ENCODE measurements at regions of chr17 and their contacts with region 1.

Region 1: GRCh38 chr17:44218344-44219107 is 949 bp downstream of the UBTF start:
- DNase-seq: peak; percentile 89
- ATAC-seq: peak; percentile 50
- H3K4me3 ChIP-seq: peak overlapping the region; percentile 88 to 99 (median 98)
- H3K27ac ChIP-seq: peak overlapping the region; percentile 89
- H3K4me1 ChIP-seq: peaks cover 30% of the 10 kb centered on the region
- H3K27me3 ChIP-seq: no peaks in the 10 kb centered on the region; a peak in 1 of 5 replicates
- CTCF ChIP-seq: peak; percentile 82
- EP300 ChIP-seq: no peak; a peak in 1 of 4 replicates
- POLR2A ChIP-seq: peak; percentile 7 to 59; a peak in 3 of 4 replicates
- RAD21 ChIP-seq: no peak

Region 2: GRCh38 chr17:44186307-44187130 is 32.0 kb before region 1 on chr17 and contains the start of gene TMUB2:
- CTCF ChIA-PET with region 1: no interaction called
- POLR2A ChIA-PET with region 1: interaction called, 17 read pairs
- in situ Hi-C with region 1: no loop called
- intact Hi-C with region 1: no loop called
- DNase-seq: peak; percentile 99
- ATAC-seq: peak; percentile 81
- H3K4me3 ChIP-seq: peak within 1 kb of the TSS; percentile 95 to 97 (median 96)
- H3K27ac ChIP-seq: peak within 1 kb of the TSS; percentile 91
- H3K4me1 ChIP-seq: peaks cover 55% of the 10 kb centered on the region
- H3K27me3 ChIP-seq: no peaks in the 10 kb centered on the region; a peak in 1 of 5 replicates
- CTCF ChIP-seq: peak; percentile 16; the same call in 1 of the 2 replicates
- EP300 ChIP-seq: peak in 1 of 2 experiments; percentile 34; a peak in 1 of 4 replicates
- POLR2A ChIP-seq: peak; percentile 95 to 97
- RAD21 ChIP-seq: peak; percentile 9; the same call in 1 of the 2 replicates
- total RNA-seq, gene TMUB2: 18.7 and 26.9 TPM in 2 replicates

Region 3: GRCh38 chr17:44199553-44200477 is 18.7 kb before region 1 on chr17 and contains the start of gene ATXN7L3:
- CTCF ChIA-PET with region 1: interaction called, 13 read pairs
- POLR2A ChIA-PET with region 1: interaction called, 25 read pairs
- in situ Hi-C with region 1: no loop called
- intact Hi-C with region 1: loop called (anchors 2 kb)
- DNase-seq: peak; percentile 97
- ATAC-seq: peak; percentile 82
- H3K4me3 ChIP-seq: peak within 1 kb of the TSS; percentile 91 to 94 (median 91)
- H3K27ac ChIP-seq: peak within 1 kb of the TSS; percentile 95
- H3K4me1 ChIP-seq: peaks cover 39% of the 10 kb centered on the region
- H3K27me3 ChIP-seq: no peaks in the 10 kb centered on the region; a peak in 1 of 5 replicates
- CTCF ChIP-seq: no peak
- EP300 ChIP-seq: no peak; a peak in 1 of 4 replicates
- POLR2A ChIP-seq: peak in 1 of 2 experiments; percentile 65; a peak in 2 of 4 replicates
- RAD21 ChIP-seq: peak; percentile 24; the same call in 1 of the 2 replicates
- total RNA-seq, gene ATXN7L3: 45.7 and 59.1 TPM in 2 replicates

Region 4: GRCh38 chr17:44279666-44280391 is 61.3 kb after region 1 on chr17:
- CTCF ChIA-PET with region 1: no interaction called
- POLR2A ChIA-PET with region 1: interaction called, 13 read pairs
- in situ Hi-C with region 1: no loop called
- intact Hi-C with region 1: no loop called
- DNase-seq: peak; percentile 86
- ATAC-seq: peak; percentile 96
- H3K4me3 ChIP-seq: peak overlapping the region; percentile 8 to 69 (median 41); a peak in 4 of 6 replicates
- H3K27ac ChIP-seq: no peak overlapping the region
- H3K4me1 ChIP-seq: peaks cover 18% of the 10 kb centered on the region
- H3K27me3 ChIP-seq: peaks cover 0 to 28% of the 10 kb centered on the region in 2 experiments; a peak in 4 of 5 replicates
- CTCF ChIP-seq: peak; percentile 36; the same call in 1 of the 2 replicates
- EP300 ChIP-seq: peak in 1 of 2 experiments; percentile 24; a peak in 1 of 4 replicates
- POLR2A ChIP-seq: no peak
- RAD21 ChIP-seq: no peak

Region 5: DNA sequence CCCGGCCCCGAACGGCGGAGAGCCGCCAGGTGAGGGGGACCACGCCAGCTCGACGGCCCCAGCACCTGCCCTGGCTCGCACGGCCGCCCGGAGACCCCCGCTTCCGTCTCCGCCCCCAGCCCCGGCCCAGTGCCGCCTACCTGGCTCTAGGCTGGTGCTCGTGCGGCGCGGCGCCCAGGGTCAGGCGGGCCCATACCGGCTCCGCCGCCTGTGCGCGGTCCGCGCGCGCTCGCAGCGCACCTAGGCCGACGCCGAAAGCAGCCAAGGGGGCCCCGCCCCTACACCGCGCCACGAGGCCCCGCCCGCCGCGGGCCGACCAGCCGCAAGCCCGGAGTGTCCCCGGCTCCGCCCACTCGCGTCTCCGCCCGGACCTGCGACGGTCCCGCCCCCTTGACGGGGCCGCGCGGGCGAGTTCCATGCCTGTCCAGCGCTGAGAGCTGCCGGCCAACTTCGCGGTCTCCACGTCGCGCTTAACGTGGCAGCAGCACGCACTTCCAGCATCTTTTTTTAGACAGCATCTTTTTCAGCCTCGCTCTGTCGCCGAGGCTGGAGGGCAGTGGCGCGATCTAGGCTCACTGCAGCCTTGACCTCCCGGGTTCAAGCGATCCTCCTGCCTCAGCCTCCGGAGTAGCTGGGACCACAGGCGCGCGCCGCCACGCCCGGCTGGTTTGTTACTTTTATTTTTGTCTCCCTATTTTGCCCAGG is 106.2 kb after region 1 on chr17 and contains the start of gene SLC25A39:
- CTCF ChIA-PET with region 1: no interaction called
- POLR2A ChIA-PET with region 1: interaction called, 13 read pairs
- in situ Hi-C with region 1: loop called (anchors 5 kb)
- intact Hi-C with region 1: loop called (anchors 2 kb)
- DNase-seq: peak; percentile 85
- ATAC-seq: peak; percentile 80
- H3K4me3 ChIP-seq: peak within 1 kb of the TSS; percentile 78 to 97 (median 91)
- H3K27ac ChIP-seq: peak within 1 kb of the TSS; percentile 61
- H3K4me1 ChIP-seq: peaks cover 55% of the 10 kb centered on the region
- H3K27me3 ChIP-seq: no peaks in the 10 kb centered on the region; a peak in 3 of 5 replicates
- CTCF ChIP-seq: peak; percentile 22; the same call in 1 of the 2 replicates
- EP300 ChIP-seq: peak in 1 of 2 experiments; percentile 31; a peak in 2 of 4 replicates
- POLR2A ChIP-seq: peak; percentile 72 to 91
- RAD21 ChIP-seq: peak; percentile 71
- total RNA-seq, gene SLC25A39: 119 and 151 TPM in 2 replicates

Region 6: GRCh38 chr17:44344939-44345453 is 126.5 kb after region 1 on chr17 and contains the start of gene GRN:
- CTCF ChIA-PET with region 1: no interaction called
- POLR2A ChIA-PET with region 1: interaction called, 17 read pairs
- in situ Hi-C with region 1: no loop called
- intact Hi-C with region 1: no loop called
- DNase-seq: peak; percentile 100
- ATAC-seq: peak; percentile 98
- H3K4me3 ChIP-seq: peak within 1 kb of the TSS; percentile 86 to 99 (median 95)
- H3K27ac ChIP-seq: peak within 1 kb of the TSS; percentile 68
- H3K4me1 ChIP-seq: peaks cover 25% of the 10 kb centered on the region
- H3K27me3 ChIP-seq: peaks cover 0 to 10% of the 10 kb centered on the region in 2 experiments; a peak in 1 of 5 replicates
- CTCF ChIP-seq: no peak
- EP300 ChIP-seq: peak in 1 of 2 experiments; percentile 63; a peak in 2 of 4 replicates
- POLR2A ChIP-seq: peak; percentile 92 to 97
- RAD21 ChIP-seq: no peak; the same call in 1 of the 2 replicates
- total RNA-seq, gene GRN: 41.2 and 86.6 TPM in 2 replicates

Measured in HepG2 (cell line).